ENCODE measurements at regions of chr7 and their contacts with region 1.

Region 1: GRCh38 chr7:127708788-127709187 is 56.8 kb downstream of the SND1 start:
- DNase-seq: peak; percentile 36 to 77 (median 56)
- H3K4me3 ChIP-seq: no peak overlapping the region
- H3K4me3 Mint-ChIP-seq: no peak overlapping the region
- H3K27ac ChIP-seq: no peak overlapping the region
- H3K27ac Mint-ChIP-seq: peak overlapping the region in 3 of 8 donors; percentile 8 to 18 (median 15)
- H3K4me1 ChIP-seq: no peaks in the 10 kb centered on the region
- H3K4me1 Mint-ChIP-seq: peaks cover 0 to 3% (median 0%) of the 10 kb centered on the region in 3 donors
- H3K27me3 ChIP-seq: no peaks in the 10 kb centered on the region
- H3K27me3 Mint-ChIP-seq: no peaks in the 10 kb centered on the region

Region 2: DNA sequence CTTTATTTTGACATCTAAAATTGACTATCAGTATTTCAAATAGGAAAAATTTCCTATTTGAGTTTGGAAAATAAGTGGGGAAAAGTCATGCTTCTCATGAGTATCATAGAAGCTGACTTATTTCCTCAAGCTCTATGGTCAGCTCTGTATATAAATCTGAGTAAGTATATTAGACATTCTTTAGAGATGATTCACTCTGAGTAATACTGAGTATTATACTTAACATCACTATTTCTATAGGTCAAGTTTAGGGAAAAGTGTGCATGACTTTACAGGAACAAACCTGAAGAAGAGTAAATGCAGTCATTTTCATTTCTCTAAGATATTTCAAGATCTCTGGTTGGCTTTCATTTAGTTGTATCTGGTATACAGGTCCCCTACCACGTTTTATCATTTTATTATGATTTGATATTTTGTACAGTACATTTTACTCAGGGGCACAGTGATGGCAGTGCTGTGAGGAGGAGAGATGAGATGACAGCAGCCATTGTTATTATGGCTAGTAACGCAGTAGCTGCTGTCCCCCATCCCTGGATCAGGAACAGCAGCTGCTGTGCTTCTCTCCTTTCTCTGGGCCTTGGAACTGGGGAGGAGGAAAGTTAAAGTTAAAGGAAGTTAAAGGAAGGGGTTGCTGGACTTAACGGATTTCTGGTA is 41.6 kb before region 1 on chr7:
- CTCF ChIA-PET with region 1: no interaction called
- POLR2A ChIA-PET with region 1: no interaction called
- DNase-seq: no peak
- H3K4me3 ChIP-seq: no peak overlapping the region
- H3K4me3 Mint-ChIP-seq: no peak overlapping the region
- H3K27ac ChIP-seq: no peak overlapping the region
- H3K27ac Mint-ChIP-seq: peak overlapping the region in 3 of 8 donors; percentile 15 to 61 (median 59)
- H3K4me1 ChIP-seq: no peaks in the 10 kb centered on the region
- H3K4me1 Mint-ChIP-seq: peaks cover 62 to 81% (median 70%) of the 10 kb centered on the region in 3 donors
- H3K27me3 ChIP-seq: no peaks in the 10 kb centered on the region
- H3K27me3 Mint-ChIP-seq: no peaks in the 10 kb centered on the region

Region 3: DNA sequence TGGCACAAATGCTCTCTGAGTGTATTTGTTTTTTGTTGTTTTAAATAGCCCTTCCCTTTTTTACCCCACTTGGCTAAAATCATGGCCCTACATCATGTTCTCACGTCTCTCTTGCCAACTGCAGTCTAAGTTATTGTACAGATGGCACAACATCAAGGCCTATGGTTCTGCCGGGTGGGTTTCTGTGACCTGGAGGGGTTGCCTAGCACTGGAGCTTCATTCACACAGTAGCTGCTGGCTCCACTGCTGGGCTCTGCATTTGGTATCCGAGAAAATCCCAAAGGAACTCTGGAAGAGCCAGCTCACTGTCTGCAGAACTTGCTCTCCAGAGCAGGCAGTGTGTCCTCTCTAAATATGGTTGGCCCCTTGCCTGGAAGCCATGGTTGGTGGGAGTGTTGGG is 201.9 kb after region 1 on chr7:
- CTCF ChIA-PET with region 1: no interaction called
- POLR2A ChIA-PET with region 1: no interaction called
- DNase-seq: no peak
- H3K4me3 ChIP-seq: no peak overlapping the region
- H3K4me3 Mint-ChIP-seq: no peak overlapping the region
- H3K27ac ChIP-seq: no peak overlapping the region
- H3K27ac Mint-ChIP-seq: no peak overlapping the region
- H3K4me1 ChIP-seq: no peaks in the 10 kb centered on the region
- H3K4me1 Mint-ChIP-seq: peaks cover 17 to 26% (median 23%) of the 10 kb centered on the region in 3 donors
- H3K27me3 ChIP-seq: no peaks in the 10 kb centered on the region
- H3K27me3 Mint-ChIP-seq: peaks cover 0 to 2% of the 10 kb centered on the region in 2 donors

Region 4: DNA sequence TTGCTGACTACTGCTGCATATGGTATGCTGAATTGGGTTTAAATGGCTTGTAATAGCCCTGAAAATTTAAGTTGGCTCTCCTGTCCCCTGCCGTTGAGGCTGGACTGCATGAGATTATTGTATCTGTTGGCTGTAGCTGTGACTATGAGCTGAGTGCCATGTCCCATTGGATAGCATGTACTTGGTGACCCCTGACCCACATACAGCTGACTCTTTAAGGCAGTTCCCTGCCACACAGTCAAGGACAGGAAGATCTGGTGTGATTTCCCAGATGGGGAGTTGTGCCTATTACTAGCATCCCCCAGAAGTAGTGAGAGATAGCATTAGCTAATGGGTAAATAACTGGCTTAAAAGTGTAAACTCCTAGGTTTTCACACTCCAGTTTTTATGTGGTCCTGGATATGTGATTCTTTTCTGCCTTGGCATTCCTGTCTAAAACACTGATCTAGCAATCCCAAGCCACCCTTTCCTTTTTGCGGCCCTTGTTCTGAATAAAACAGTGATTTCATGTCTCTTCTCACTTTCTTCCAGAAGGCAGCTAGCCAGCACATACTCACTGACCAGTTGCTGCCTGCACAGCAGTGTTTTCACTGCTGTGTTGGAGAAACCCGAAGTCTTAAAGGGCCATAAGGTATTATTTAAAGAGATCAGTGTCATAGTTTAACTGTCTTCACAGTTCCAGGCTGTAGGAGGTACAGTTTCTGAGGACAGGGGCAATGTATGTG is 286.5 kb after region 1 on chr7:
- CTCF ChIA-PET with region 1: no interaction called
- POLR2A ChIA-PET with region 1: no interaction called
- DNase-seq: no peak
- H3K4me3 ChIP-seq: no peak overlapping the region
- H3K4me3 Mint-ChIP-seq: no peak overlapping the region
- H3K27ac ChIP-seq: no peak overlapping the region
- H3K27ac Mint-ChIP-seq: peak overlapping the region in 1 of 8 donors; percentile 26
- H3K4me1 ChIP-seq: no peaks in the 10 kb centered on the region
- H3K4me1 Mint-ChIP-seq: peaks cover 0 to 6% (median 1%) of the 10 kb centered on the region in 3 donors
- H3K27me3 ChIP-seq: no peaks in the 10 kb centered on the region
- H3K27me3 Mint-ChIP-seq: no peaks in the 10 kb centered on the region

Region 5: DNA sequence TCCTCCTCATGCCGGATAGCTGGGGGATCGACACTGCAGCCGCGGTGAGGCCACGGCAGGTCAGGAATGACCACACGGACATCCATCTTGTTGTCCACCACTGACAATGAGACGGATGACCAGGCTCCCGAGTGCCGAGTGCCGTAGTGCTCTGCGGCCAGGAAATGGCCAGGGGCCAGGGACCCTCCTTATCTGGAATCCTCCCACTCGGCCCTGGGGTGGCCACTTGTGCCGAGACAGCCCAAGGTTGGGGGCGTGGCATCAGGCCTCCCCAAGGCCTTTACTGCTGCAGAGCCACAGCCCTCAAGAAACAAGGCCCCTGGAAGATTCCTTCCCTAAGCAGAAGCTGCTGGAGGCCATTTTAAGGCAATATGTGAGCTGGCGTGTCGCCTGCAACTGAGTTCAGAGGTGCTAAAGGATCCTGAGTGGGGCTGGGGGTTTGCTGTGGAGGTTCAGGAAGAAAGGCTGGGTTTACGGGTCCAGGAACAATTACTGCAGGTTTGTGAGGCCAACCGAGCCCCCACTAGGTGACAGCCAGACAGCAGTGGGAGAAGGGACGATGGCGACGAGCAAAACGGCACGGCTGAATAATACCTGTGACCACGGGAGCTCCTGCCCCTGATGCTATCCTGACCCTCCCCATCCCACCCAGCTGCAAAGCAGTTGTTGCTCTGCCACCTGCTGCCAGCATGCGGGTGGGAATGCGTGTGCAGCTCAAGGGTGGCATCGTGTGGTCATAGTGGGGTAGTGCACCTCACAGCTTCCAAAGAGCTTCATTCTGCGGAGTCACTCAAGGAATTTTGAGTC is 500.6 kb after region 1 on chr7:
- CTCF ChIA-PET with region 1: interaction called, 132 read pairs
- POLR2A ChIA-PET with region 1: no interaction called
- DNase-seq: peak; percentile 43 to 71 (median 53)
- H3K4me3 ChIP-seq: no peak overlapping the region
- H3K4me3 Mint-ChIP-seq: no peak overlapping the region
- H3K27ac ChIP-seq: no peak overlapping the region
- H3K27ac Mint-ChIP-seq: peak overlapping the region in 1 of 8 donors; percentile 31
- H3K4me1 ChIP-seq: no peaks in the 10 kb centered on the region
- H3K4me1 Mint-ChIP-seq: peaks cover 0 to 2% (median 0%) of the 10 kb centered on the region in 3 donors
- H3K27me3 ChIP-seq: peaks cover 4% of the 10 kb centered on the region
- H3K27me3 Mint-ChIP-seq: peaks cover 9 to 24% of the 10 kb centered on the region in 2 donors